CD4-positive, alpha-beta T cell (primary cell): ENCODE measurements at regions of chrX and their contacts with region 1.

Region 1: GRCh38 chrX:11040405-11040804 is 70.7 kb upstream of the HCCS start:
- DNase-seq: no peak
- ATAC-seq: no peak
- H3K4me3 ChIP-seq: no peak overlapping the region
- H3K4me3 Mint-ChIP-seq: no peak overlapping the region
- H3K27ac ChIP-seq: no peak overlapping the region
- H3K27ac Mint-ChIP-seq: no peak overlapping the region
- H3K4me1 ChIP-seq: no peaks in the 10 kb centered on the region
- H3K4me1 Mint-ChIP-seq: no peaks in the 10 kb centered on the region
- H3K27me3 ChIP-seq: no peaks in the 10 kb centered on the region
- H3K27me3 Mint-ChIP-seq: no peaks in the 10 kb centered on the region
- CTCF ChIP-seq: no peak

Region 2: GRCh38 chrX:12032082-12032481 is 991.7 kb after region 1 on chrX:
- CTCF ChIA-PET with region 1: no interaction called
- POLR2A ChIA-PET with region 1: no interaction called
- intact Hi-C with region 1: loop called in 1 of 2 experiments (anchors 10 kb)
- DNase-seq: no peak
- ATAC-seq: no peak
- H3K4me3 ChIP-seq: no peak overlapping the region
- H3K4me3 Mint-ChIP-seq: no peak overlapping the region
- H3K27ac ChIP-seq: no peak overlapping the region
- H3K27ac Mint-ChIP-seq: no peak overlapping the region
- H3K4me1 ChIP-seq: no peaks in the 10 kb centered on the region
- H3K4me1 Mint-ChIP-seq: no peaks in the 10 kb centered on the region
- H3K27me3 ChIP-seq: no peaks in the 10 kb centered on the region
- H3K27me3 Mint-ChIP-seq: peaks cover 7% of the 10 kb centered on the region
- CTCF ChIP-seq: no peak